ENCODE measurements at regions of chr1 and their contacts with region 1.

Region 1: DNA sequence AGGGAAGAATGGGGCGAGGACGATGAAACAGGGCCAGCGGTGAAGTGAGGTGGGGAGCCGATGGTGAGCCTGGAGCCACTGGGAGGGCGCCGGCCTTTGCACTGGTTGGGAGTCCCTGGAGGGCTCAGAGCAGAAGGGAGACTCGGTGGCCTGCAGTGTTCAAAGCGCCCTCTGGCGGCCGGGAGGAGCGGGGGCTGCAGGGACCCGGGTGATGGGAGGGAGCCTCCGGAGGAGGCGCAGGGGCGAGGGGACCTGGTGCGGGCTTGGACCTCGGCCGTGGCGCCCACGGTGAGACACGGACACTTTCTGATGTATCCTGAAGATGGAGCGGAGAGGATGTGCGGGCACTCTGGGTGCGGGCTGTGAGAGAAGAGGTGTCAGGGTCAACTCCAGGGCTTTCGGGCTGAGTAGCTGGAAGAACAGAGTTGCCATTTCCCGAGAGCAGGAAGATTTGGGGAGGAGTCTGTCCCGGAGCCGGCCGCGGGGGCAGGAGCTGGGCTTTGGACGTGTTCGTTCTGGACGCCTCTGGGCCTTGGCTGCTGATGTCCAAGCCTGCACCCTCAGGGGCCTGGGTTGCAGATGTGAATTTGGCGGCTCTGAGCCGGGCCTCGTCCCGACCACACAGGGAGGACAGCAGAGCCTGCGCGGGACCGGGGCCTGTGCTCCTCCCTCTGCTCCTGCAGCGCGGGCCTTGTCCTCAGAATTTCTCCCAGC is 29.7 kb downstream of the HEYL start:
- DNase-seq: peak; percentile 55 to 74 (median 69)
- H3K4me3 ChIP-seq: no peak overlapping the region
- H3K4me3 Mint-ChIP-seq: peak overlapping the region in 1 of 8 donors; percentile 69
- H3K27ac ChIP-seq: no peak overlapping the region
- H3K27ac Mint-ChIP-seq: no peak overlapping the region
- H3K4me1 ChIP-seq: peaks cover 3% of the 10 kb centered on the region
- H3K4me1 Mint-ChIP-seq: peaks cover 3 to 12% (median 6%) of the 10 kb centered on the region in 4 donors
- H3K27me3 ChIP-seq: no peaks in the 10 kb centered on the region
- H3K27me3 Mint-ChIP-seq: peaks cover 4 to 7% of the 10 kb centered on the region in 2 donors

Region 2: GRCh38 chr1:39596163-39596562 is 13.6 kb before region 1 on chr1:
- CTCF ChIA-PET with region 1: interaction called, 14 read pairs
- POLR2A ChIA-PET with region 1: no interaction called
- intact Hi-C with region 1: no loop called
- DNase-seq: no peak
- H3K4me3 ChIP-seq: no peak overlapping the region
- H3K4me3 Mint-ChIP-seq: no peak overlapping the region
- H3K27ac ChIP-seq: no peak overlapping the region
- H3K27ac Mint-ChIP-seq: no peak overlapping the region
- H3K4me1 ChIP-seq: no peaks in the 10 kb centered on the region
- H3K4me1 Mint-ChIP-seq: no peaks in the 10 kb centered on the region
- H3K27me3 ChIP-seq: no peaks in the 10 kb centered on the region
- H3K27me3 Mint-ChIP-seq: peaks cover 4 to 10% of the 10 kb centered on the region in 2 donors

Region 3: DNA sequence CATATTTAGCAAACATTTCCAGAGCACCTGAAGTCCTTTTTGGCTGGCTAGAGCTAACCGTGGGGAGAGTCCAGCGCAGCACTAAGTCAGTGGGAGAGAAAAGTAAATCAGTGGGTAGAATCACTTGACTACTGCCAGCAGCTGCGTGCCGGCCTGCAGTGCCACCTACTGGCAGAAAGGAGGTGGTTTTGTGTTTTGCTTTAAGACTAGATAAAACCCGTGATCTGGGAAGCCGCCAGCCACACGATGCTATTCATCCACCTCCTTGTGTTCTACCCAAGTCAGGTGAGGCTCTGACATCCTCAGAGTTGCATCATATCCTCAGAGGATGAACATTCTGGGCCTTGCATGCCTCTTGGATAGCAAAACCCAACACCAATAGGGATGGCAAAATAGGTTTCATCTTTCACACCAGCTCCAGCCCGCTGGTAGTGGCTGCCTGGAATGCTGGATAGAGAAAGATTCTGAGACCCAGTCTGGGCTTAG is 43.8 kb after region 1 on chr1:
- CTCF ChIA-PET with region 1: interaction called, 280 read pairs
- POLR2A ChIA-PET with region 1: interaction called, 3 read pairs
- intact Hi-C with region 1: loop called (anchors 1 kb)
- DNase-seq: peak; percentile 65 to 74 (median 71)
- H3K4me3 ChIP-seq: no peak overlapping the region
- H3K4me3 Mint-ChIP-seq: peak overlapping the region in 1 of 8 donors; percentile 3
- H3K27ac ChIP-seq: no peak overlapping the region
- H3K27ac Mint-ChIP-seq: no peak overlapping the region
- H3K4me1 ChIP-seq: peaks cover 5% of the 10 kb centered on the region
- H3K4me1 Mint-ChIP-seq: peaks cover 4 to 11% (median 8%) of the 10 kb centered on the region in 4 donors
- H3K27me3 ChIP-seq: no peaks in the 10 kb centered on the region
- H3K27me3 Mint-ChIP-seq: peaks cover 2 to 7% of the 10 kb centered on the region in 2 donors

Region 4: DNA sequence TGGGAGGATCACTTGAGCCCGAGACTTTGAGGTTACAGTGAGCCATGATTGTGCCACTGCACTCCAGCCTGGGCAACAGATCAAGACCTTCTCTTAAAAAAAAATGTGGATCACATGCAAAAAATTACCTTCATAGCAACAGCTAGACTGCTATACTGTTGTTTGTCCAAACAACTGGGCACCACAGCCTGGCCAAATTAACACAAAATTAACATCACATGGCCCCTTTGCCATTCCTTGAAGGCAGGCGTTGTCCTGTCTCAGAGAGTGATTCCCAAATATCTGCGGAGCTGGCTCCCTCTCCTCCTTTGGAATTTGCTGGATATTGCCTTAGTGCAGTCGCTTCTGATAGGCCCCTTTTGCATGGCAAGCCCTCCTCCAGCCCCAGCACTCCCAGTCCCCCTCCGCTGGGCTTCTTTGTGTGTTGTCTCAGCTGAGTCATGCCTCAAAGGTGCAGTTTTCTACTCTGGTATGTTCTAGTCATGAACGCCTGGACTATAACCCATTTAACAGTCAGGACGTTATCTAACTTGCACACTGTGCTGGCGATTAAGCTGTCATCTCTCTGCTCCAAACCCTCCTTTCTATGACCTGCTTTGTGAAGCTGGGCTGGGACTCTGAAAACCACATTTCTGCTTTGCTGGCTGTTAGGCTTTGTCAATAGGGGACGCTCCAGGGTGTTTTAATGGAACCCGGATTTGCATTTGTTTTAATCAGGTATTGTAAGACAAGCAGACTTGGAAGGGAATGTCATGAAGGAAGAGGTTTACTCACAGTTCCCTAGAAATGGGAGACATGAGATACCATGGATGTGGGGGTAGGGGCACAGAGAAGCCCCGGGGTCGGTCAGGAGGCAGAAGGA is 101.6 kb after region 1 on chr1:
- CTCF ChIA-PET with region 1: interaction called, 46 read pairs
- POLR2A ChIA-PET with region 1: no interaction called
- intact Hi-C with region 1: no loop called
- DNase-seq: no peak
- H3K4me3 ChIP-seq: no peak overlapping the region
- H3K4me3 Mint-ChIP-seq: no peak overlapping the region
- H3K27ac ChIP-seq: no peak overlapping the region
- H3K27ac Mint-ChIP-seq: peak overlapping the region in 1 of 7 donors; percentile 14
- H3K4me1 ChIP-seq: no peaks in the 10 kb centered on the region
- H3K4me1 Mint-ChIP-seq: no peaks in the 10 kb centered on the region
- H3K27me3 ChIP-seq: no peaks in the 10 kb centered on the region
- H3K27me3 Mint-ChIP-seq: peaks cover 5 to 19% of the 10 kb centered on the region in 2 donors

Region 5: DNA sequence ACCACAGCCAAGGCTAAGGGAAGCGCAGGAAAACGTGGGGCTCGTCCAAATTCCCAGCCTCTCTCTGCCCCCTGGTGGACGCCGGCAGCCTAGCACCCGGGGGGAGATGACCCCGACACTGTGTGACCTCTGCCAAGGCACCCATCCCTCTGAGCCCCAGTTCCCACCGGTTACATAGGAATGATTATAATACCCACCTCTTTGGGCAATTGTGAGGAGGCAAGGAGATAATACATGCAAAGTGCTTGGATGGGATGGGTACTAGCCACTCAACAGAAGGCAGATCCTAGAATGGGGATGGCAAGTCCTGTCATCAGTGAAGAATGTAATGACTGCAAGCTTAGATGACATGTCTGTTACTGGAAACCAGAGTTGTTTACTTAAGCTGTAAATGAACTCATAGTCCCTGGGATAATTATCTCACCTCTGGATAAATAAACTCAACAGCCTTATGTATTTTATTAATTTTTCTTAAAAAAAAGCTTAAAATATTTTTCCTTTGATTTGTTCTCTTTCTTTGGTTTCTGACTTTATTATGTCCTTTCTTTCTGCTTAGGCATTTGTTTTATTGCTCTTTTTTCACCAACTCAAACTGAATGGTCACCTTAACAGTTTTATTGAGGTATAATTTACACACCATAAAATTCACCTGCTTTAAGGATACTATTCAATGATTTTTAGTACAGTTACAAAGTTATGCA is 190.1 kb after region 1 on chr1:
- CTCF ChIA-PET with region 1: interaction called, 39 read pairs
- POLR2A ChIA-PET with region 1: no interaction called
- intact Hi-C with region 1: no loop called
- DNase-seq: peak; percentile 46 to 65 (median 60)
- H3K4me3 ChIP-seq: peak overlapping the region in 1 of 2 donors; percentile 26
- H3K4me3 Mint-ChIP-seq: peak overlapping the region; percentile 59 to 84 (median 78)
- H3K27ac ChIP-seq: peak overlapping the region; percentile 57
- H3K27ac Mint-ChIP-seq: peak overlapping the region; percentile 8 to 97 (median 95)
- H3K4me1 ChIP-seq: peaks cover 8% of the 10 kb centered on the region
- H3K4me1 Mint-ChIP-seq: peaks cover 5 to 14% (median 11%) of the 10 kb centered on the region in 4 donors
- H3K27me3 ChIP-seq: no peaks in the 10 kb centered on the region
- H3K27me3 Mint-ChIP-seq: no peaks in the 10 kb centered on the region

Measured in CD4-positive, alpha-beta memory T cell (primary cell).